ENCODE measurements at regions of chr4 and their contacts with region 1.

Region 1: DNA sequence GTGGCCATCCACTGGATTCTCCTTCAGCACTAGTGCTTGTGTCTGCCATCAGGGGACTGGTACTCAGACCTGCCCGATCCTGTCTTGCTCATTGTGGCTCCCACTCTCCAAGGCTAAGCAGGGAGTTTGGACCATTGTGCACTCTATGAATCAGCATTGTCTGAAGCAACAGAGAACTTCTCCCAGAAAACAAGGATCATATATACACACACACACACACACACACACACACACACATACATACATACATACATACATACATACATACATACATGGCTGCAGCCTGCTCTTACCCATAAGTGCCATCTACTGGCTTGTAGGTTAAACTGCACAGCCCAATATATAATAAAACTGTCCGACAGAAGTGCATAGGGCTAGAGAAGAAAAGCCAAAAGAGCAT is 345.3 kb upstream of the LCORL start:
- DNase-seq: no peak
- CTCF ChIP-seq: peak; percentile 69

Region 2: GRCh38 chr4:17562160-17562559 is 804.7 kb before region 1 on chr4:
- in situ Hi-C with region 1: loop called (anchors 25 kb)
- DNase-seq: no peak
- CTCF ChIP-seq: no peak

Measured in GM13976 (cell line).